Endothelial cell of umbilical vein (primary cell): ENCODE measurements at regions of chr3 and their contacts with region 1.

Region 1: DNA sequence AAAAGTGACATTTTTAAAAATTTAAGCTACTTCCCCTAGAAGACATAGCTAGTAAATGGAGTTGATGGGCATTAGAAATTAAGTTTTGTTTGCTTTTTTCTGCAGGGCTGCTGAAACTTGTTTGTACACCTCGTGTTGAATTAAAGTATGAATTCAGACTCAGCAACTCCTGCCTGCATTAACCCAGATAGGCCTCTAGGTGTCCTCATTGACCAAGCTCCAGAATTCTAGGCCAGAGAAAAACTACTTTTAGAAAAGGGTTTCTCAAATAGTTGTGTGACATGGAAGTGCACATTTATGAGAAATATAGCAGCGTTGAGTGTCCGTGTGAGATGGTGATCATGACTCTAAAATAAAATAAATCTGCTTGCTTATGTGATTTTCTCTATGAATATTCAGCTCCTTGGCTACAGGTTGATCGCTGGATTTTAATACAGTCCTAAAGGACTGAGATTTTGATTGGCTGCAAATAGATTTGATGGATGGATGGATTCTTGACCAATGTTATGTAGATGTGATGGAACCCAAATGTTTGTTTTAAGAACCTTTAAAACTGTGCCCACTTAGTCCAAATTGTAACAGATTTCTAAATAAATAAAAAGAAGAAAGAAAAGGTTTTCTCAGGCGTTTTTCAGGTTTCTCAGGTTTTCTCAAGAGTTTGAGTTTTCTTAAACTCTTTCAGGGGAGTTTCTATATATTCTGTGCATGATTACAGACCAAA is 39.4 kb upstream of the LMOD3 start:
- DNase-seq: peak; percentile 65
- H3K4me3 ChIP-seq: no peak overlapping the region
- H3K27ac ChIP-seq: no peak overlapping the region
- H3K4me1 ChIP-seq: no peaks in the 10 kb centered on the region
- H3K27me3 ChIP-seq: peaks cover 0 to 1% of the 10 kb centered on the region in 2 experiments
- CTCF ChIP-seq: peak; percentile 75
- POLR2A ChIP-seq: no peak

Region 2: GRCh38 chr3:69120879-69121464 is 40.8 kb before region 1 on chr3:
- CTCF ChIA-PET with region 1: interaction called, 56 read pairs
- POLR2A ChIA-PET with region 1: no interaction called
- dilution Hi-C with region 1: no loop called
- intact Hi-C with region 1: loop called (anchors 2 kb)
- DNase-seq: peak; percentile 86
- H3K4me3 ChIP-seq: no peak overlapping the region
- H3K27ac ChIP-seq: no peak overlapping the region
- H3K4me1 ChIP-seq: peaks cover 20% of the 10 kb centered on the region
- H3K27me3 ChIP-seq: no peaks in the 10 kb centered on the region
- CTCF ChIP-seq: peak; percentile 85 to 88
- POLR2A ChIP-seq: no peak

Region 3: GRCh38 chr3:69181592-69182211 is 20.0 kb after region 1 on chr3:
- CTCF ChIA-PET with region 1: interaction called, 12 read pairs
- POLR2A ChIA-PET with region 1: no interaction called
- dilution Hi-C with region 1: no loop called
- intact Hi-C with region 1: no loop called
- DNase-seq: peak; percentile 98
- H3K4me3 ChIP-seq: no peak overlapping the region
- H3K27ac ChIP-seq: peak overlapping the region; percentile 93
- H3K4me1 ChIP-seq: peaks cover 59% of the 10 kb centered on the region
- H3K27me3 ChIP-seq: no peaks in the 10 kb centered on the region
- CTCF ChIP-seq: no peak
- POLR2A ChIP-seq: peak; percentile 31

Region 4: DNA sequence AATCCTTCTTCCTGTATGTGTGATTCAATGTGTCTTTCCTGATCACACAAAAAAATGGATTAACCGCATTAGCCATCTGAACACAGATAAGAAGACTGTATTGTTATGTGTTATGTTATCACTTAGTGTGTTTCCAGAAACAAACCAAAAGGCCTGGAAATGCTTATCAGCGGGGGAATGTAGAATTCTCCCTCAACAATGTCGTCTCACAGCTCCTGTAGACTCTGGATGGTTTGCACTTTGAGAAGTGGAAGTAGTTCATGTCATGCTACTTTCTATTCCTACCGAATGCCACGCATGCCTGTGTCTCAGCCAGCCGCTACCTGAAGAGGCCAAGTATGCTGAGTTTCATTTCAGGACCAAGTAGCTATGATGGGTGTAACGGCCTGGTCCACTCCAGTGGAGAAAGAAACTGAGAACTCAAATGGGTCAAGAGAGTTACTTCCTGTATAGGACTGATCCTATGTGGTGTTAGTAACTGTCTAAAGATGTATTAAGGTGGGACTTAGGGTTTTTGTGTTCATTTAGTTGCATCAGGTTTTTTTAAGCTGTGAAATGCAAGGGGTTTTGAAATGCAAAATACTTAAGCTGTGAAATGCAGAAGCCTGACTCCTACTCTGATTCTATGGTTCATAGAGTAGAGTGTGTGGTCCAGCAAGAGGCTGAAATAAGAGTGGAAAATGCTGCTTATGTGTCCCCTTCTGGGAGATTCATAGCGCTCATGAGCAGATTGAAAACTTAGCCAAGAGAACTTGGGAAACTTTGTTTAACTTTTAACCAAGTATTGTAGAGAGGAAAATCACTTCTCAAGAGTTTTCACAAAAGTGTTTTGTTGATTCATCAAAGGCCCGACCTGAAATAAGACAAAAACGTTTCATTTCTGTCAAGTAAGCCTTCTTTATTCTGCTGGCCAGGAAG is 79.2 kb after region 1 on chr3:
- CTCF ChIA-PET with region 1: interaction called, 17 read pairs
- POLR2A ChIA-PET with region 1: interaction called, 5 read pairs
- dilution Hi-C with region 1: no loop called
- intact Hi-C with region 1: loop called (anchors 2 kb)
- DNase-seq: peak; percentile 80
- H3K4me3 ChIP-seq: no peak overlapping the region
- H3K27ac ChIP-seq: peak overlapping the region; percentile 90
- H3K4me1 ChIP-seq: peaks cover 66% of the 10 kb centered on the region
- H3K27me3 ChIP-seq: no peaks in the 10 kb centered on the region
- CTCF ChIP-seq: no peak
- POLR2A ChIP-seq: no peak

Region 5: GRCh38 chr3:69260216-69260787 is 98.6 kb after region 1 on chr3:
- CTCF ChIA-PET with region 1: no interaction called
- POLR2A ChIA-PET with region 1: no interaction called
- dilution Hi-C with region 1: no loop called
- intact Hi-C with region 1: no loop called
- DNase-seq: no peak
- H3K4me3 ChIP-seq: no peak overlapping the region
- H3K27ac ChIP-seq: no peak overlapping the region
- H3K4me1 ChIP-seq: no peaks in the 10 kb centered on the region
- H3K27me3 ChIP-seq: no peaks in the 10 kb centered on the region
- CTCF ChIP-seq: no peak
- POLR2A ChIP-seq: no peak

Region 6: DNA sequence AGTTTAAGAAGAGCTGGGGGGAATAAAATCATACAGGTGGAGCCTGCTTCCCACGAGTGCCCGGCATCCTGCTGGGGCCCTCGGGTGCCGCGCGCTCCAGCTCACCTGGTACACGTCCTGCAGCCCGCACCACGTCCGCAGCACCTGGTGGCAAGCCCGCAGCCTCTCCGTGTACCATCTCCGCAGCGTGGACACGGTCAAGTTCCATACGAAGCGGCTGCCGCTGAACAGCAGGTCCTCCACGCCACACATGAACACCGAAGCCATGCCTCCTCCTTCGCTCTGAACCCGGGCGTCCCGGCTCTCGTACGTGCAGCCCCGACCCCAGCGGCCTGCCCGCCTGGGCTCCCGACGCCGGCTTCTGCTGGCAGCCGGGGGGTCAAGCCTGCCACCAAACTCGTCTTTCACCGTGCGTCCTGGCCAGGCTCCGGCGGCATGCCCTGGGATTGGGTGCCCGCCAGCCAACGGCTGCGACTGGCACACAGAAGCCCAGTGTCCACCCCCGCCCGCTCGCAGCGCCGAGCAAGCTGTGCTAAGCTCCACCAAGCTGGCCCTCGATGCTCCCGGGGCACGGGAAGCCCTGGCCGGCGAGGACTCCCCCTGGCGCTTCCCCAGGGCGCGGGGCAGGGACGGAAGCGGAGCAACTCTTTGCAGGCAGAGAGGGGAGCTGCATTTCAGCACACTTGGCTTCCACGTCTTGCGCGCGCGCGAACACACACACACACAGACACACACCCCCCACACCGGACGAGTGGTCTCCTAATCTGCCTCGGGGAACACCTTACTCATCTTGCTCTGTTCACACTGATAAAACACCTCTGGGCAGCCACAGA is 224.2 kb after region 1 on chr3 and contains the start of gene FRMD4B:
- CTCF ChIA-PET with region 1: interaction called, 10 read pairs
- POLR2A ChIA-PET with region 1: no interaction called
- dilution Hi-C with region 1: no loop called
- intact Hi-C with region 1: no loop called
- DNase-seq: peak; percentile 74
- H3K4me3 ChIP-seq: peak within 1 kb of the TSS; percentile 18 to 50 (median 33)
- H3K27ac ChIP-seq: no peak within 1 kb of the TSS
- H3K4me1 ChIP-seq: peaks cover 17% of the 10 kb centered on the region
- H3K27me3 ChIP-seq: no peaks in the 10 kb centered on the region
- CTCF ChIP-seq: peak; percentile 38 to 50
- POLR2A ChIP-seq: no peak
- total RNA-seq, gene FRMD4B: 77.7 and 89.7 TPM in 2 replicates

Region 7: GRCh38 chr3:69671082-69671952 is 509.6 kb after region 1 on chr3:
- CTCF ChIA-PET with region 1: interaction called, 20 read pairs
- POLR2A ChIA-PET with region 1: no interaction called
- dilution Hi-C with region 1: no loop called
- intact Hi-C with region 1: loop called (anchors 1 kb)
- DNase-seq: peak; percentile 62
- H3K4me3 ChIP-seq: no peak overlapping the region
- H3K27ac ChIP-seq: no peak overlapping the region
- H3K4me1 ChIP-seq: peaks cover 4% of the 10 kb centered on the region
- H3K27me3 ChIP-seq: no peaks in the 10 kb centered on the region
- CTCF ChIP-seq: peak; percentile 48 to 59
- POLR2A ChIP-seq: no peak